ENCODE measurements at regions of chr3 and their contacts with region 1.

Region 1: DNA sequence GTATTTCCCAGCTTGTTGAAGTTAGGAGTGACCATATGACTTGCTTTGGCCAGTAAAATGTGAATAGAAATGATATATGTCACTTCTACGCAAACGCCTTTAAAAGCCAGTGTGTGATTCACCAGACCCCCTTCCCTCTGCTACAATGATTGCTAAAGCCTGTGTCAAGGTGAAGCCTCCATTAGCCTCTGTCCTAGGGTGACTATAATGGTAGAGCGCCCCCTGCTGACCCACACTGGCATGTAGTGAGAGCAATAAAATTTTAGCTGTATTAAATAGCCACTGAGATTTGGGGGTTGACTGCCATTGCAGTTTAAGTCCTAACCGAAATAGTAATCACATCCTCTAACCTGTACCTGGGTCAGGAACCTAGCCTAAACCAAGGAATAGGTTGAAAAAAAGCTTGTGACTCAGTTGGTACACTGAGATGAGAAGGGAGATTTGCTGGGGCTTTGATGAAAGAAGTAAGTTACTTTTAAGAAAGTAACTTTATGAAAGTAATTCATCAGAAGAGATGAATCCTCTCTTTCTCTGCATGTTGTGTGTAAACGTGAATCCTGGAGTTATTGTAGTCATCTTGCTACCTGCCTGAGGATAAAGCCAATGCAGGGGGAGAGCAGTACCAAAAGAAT is 52.6 kb downstream of the GTF2E1 start:
- DNase-seq: peak; percentile 55 to 77 (median 56)
- ATAC-seq: peak; percentile 98
- H3K4me3 ChIP-seq: no peak overlapping the region
- H3K27ac ChIP-seq: no peak overlapping the region
- H3K4me1 ChIP-seq: peaks cover 0 to 2% of the 10 kb centered on the region in 2 experiments; a peak in 2 of 5 replicates
- H3K27me3 ChIP-seq: no peaks in the 10 kb centered on the region
- CTCF ChIP-seq: peak; percentile 75 to 80 (median 77)
- EP300 ChIP-seq: no peak
- POLR2A ChIP-seq: no peak
- RAD21 ChIP-seq: peak; percentile 89 to 91

Region 2: GRCh38 chr3:120245386-120245785 is 549.7 kb before region 1 on chr3:
- CTCF ChIA-PET with region 1: no interaction called
- POLR2A ChIA-PET with region 1: no interaction called
- in situ Hi-C with region 1: loop called (anchors 10 kb)
- intact Hi-C with region 1: no loop called
- DNase-seq: no peak
- ATAC-seq: no peak
- H3K4me3 ChIP-seq: no peak overlapping the region
- H3K27ac ChIP-seq: no peak overlapping the region
- H3K4me1 ChIP-seq: no peaks in the 10 kb centered on the region
- H3K27me3 ChIP-seq: no peaks in the 10 kb centered on the region
- CTCF ChIP-seq: no peak
- EP300 ChIP-seq: no peak
- POLR2A ChIP-seq: no peak
- RAD21 ChIP-seq: no peak

Region 3: DNA sequence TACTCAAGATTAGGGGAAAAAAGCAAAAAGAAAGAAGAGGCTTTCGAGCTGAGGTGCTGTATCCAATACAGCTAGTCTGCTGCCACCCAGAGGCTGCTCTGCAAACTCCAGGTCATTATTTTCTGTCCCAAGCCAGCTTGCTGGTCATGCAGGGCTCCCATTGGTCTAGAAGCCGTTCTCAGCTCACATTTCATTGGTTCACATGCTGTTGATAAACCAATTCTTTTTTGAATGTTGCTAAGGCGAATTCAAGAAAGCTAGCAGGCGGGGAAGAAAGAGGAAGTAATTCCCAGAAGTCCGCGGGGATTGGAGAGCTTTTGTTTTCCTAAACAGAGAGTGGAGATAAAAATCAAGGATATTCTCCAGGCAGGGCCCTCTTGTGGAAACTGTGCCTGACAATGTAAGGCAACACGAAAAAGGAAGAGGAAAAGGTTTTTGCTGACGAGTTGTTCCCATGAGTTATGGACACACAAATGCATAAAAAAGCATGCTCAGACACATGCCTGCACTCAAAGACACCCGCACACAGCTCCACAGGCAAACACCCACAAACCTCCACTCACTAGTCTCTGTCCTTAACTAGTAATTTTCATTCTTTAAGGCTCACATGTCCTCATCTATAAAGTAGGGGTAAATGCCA is 377.7 kb before region 1 on chr3:
- CTCF ChIA-PET with region 1: no interaction called
- POLR2A ChIA-PET with region 1: no interaction called
- in situ Hi-C with region 1: no loop called
- intact Hi-C with region 1: loop called (anchors 5 kb)
- DNase-seq: peak; percentile 81 to 87 (median 85)
- ATAC-seq: peak; percentile 99
- H3K4me3 ChIP-seq: no peak overlapping the region
- H3K27ac ChIP-seq: no peak overlapping the region
- H3K4me1 ChIP-seq: no peaks in the 10 kb centered on the region
- H3K27me3 ChIP-seq: no peaks in the 10 kb centered on the region
- CTCF ChIP-seq: peak; percentile 56 to 81 (median 79)
- EP300 ChIP-seq: no peak
- POLR2A ChIP-seq: no peak
- RAD21 ChIP-seq: peak; percentile 69 to 78

Region 4: GRCh38 chr3:120567370-120568201 is 227.5 kb before region 1 on chr3:
- CTCF ChIA-PET with region 1: no interaction called
- POLR2A ChIA-PET with region 1: no interaction called
- in situ Hi-C with region 1: loop called (anchors 5 kb)
- intact Hi-C with region 1: no loop called
- DNase-seq: peak in 1 of 4 experiments; percentile 44
- ATAC-seq: peak; percentile 86
- H3K4me3 ChIP-seq: no peak overlapping the region
- H3K27ac ChIP-seq: 0 out of 3 replicates have a peak overlapping the region, but pooled peaks have one; percentile 10
- H3K4me1 ChIP-seq: peaks cover 0 to 15% of the 10 kb centered on the region in 2 experiments; a peak in 4 of 5 replicates
- H3K27me3 ChIP-seq: no peaks in the 10 kb centered on the region
- CTCF ChIP-seq: peak; percentile 23 to 42 (median 40); a peak in 4 of 6 replicates
- EP300 ChIP-seq: no peak
- POLR2A ChIP-seq: no peak
- RAD21 ChIP-seq: no peak

Region 5: DNA sequence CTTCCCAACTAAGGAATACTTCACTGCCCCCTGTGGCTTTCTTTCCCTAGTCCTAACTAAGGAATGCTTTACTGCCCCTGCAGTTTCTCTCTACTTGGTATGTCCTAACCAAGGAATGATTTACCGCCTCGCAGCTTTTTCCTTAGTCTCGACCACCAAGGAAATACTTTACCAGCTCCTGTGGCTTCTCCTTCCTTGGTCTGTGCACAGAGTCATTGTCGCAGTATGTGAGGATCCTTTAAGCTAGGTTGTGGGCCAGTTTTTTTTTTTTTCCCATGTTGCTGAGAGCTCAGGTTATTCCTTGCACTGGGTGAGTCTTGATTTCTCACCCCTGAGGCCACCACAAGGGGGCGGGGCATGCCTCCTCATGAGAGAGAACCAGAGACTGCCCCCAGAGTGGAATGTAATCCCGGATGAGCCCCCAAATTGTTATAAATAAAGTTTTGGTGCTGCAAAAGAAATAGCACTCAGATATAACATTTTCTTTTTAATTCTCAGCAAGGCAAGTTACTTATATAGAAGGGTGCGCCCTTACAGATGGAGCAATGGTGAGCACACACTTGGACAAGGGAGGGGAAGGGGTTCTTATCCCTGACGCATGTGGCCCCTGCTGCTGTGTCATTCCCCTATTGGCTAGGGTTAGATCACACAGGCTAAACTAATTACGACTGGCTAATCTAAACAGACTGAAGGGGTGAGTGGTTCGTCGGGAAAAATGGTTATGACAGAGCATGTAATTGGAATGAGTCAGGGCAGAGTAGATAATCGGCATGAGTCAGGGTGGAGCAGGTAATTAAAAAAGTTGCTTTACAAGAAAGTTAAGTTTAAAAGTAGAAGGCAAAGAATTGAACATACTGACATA is 172.0 kb before region 1 on chr3:
- CTCF ChIA-PET with region 1: interaction called, 4 read pairs
- POLR2A ChIA-PET with region 1: no interaction called
- in situ Hi-C with region 1: loop called (anchors 10 kb)
- intact Hi-C with region 1: loop called (anchors 1 kb)
- DNase-seq: peak; percentile 25 to 77 (median 44)
- ATAC-seq: peak; percentile 92
- H3K4me3 ChIP-seq: no peak overlapping the region
- H3K27ac ChIP-seq: peak overlapping the region; percentile 70; the same call in 2 of the 3 replicates
- H3K4me1 ChIP-seq: peaks cover 0 to 9% of the 10 kb centered on the region in 2 experiments; a peak in 3 of 5 replicates
- H3K27me3 ChIP-seq: no peaks in the 10 kb centered on the region
- CTCF ChIP-seq: peak; percentile 57 to 65 (median 60)
- EP300 ChIP-seq: no peak; the same call in 1 of the 2 replicates
- POLR2A ChIP-seq: no peak
- RAD21 ChIP-seq: peak; percentile 69 to 73

Region 6: DNA sequence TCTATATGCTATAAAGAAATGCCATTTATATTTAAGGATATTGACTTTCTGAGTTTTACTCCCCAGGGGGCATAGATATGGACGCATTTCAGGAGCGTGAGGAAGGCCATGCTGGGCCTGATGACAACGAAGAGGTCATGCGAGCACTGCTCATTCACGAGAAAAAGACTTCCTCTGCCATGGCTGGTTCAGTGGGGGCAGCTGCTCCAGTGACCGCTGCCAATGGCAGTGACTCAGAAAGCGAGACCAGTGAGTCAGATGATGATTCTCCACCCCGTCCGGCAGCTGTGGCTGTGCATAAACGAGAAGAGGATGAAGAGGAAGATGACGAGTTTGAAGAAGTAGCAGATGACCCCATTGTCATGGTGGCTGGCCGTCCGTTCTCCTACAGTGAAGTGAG is 14.2 kb before region 1 on chr3:
- CTCF ChIA-PET with region 1: no interaction called
- POLR2A ChIA-PET with region 1: no interaction called
- in situ Hi-C with region 1: no loop called
- intact Hi-C with region 1: no loop called
- DNase-seq: no peak
- ATAC-seq: no peak
- H3K4me3 ChIP-seq: no peak overlapping the region
- H3K27ac ChIP-seq: no peak overlapping the region
- H3K4me1 ChIP-seq: no peaks in the 10 kb centered on the region
- H3K27me3 ChIP-seq: no peaks in the 10 kb centered on the region
- CTCF ChIP-seq: no peak
- EP300 ChIP-seq: no peak
- POLR2A ChIP-seq: no peak
- RAD21 ChIP-seq: no peak